A549 (cell line): ENCODE measurements at regions of chr10 and their contacts with region 1.

Region 1: GRCh38 chr10:13299437-13300287 is at the start of gene PHYH:
- DNase-seq: peak; percentile 83 to 86
- ATAC-seq: peak; percentile 89 to 92
- H3K4me3 ChIP-seq: peak within 1 kb of the TSS; percentile 75
- H3K27ac ChIP-seq: peak within 1 kb of the TSS; percentile 90 to 96
- H3K4me1 ChIP-seq: peaks cover 9% of the 10 kb centered on the region
- CTCF ChIP-seq: no peak
- EP300 ChIP-seq: no peak
- POLR2A ChIP-seq: peak; percentile 97
- RAD21 ChIP-seq: no peak
- polyA plus RNA-seq, gene PHYH: 25.6 and 28.0 TPM in 2 replicates

Region 2: DNA sequence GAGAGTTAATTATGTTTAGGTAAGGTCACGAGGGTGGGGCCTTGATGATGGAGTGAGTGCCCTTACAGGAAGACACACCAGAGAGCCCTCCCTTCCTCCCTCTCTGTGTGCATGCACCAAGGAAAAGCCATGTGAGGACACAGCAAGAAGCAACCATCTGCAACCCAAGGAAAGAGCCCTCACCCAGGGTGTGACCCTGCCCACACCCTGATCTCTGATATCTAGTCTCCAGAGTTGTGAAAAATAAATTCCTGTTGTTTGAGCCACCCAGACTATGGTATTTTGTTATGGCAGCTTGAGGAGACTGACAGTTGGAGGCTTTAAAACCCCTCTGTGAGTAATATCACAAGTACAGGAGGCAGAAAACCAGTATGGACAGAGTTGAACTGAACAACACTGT is 153.3 kb before region 1 on chr10:
- CTCF ChIA-PET with region 1: no interaction called
- POLR2A ChIA-PET with region 1: no interaction called
- DNase-seq: peak in 1 of 2 experiments; percentile 14
- ATAC-seq: peak in 1 of 2 experiments; percentile 54; a peak in 2 of 6 replicates
- H3K4me3 ChIP-seq: no peak overlapping the region
- H3K27ac ChIP-seq: no peak overlapping the region
- H3K4me1 ChIP-seq: 0 out of 3 replicates have a peak, but pooled peaks cover 4% of the 10 kb centered on the region
- CTCF ChIP-seq: no peak
- EP300 ChIP-seq: no peak
- POLR2A ChIP-seq: no peak
- RAD21 ChIP-seq: no peak

Region 3: GRCh38 chr10:13206546-13207443 is 92.9 kb before region 1 on chr10:
- CTCF ChIA-PET with region 1: interaction called, 87 read pairs
- POLR2A ChIA-PET with region 1: interaction called, 7 read pairs
- DNase-seq: peak in 1 of 2 experiments; percentile 47
- ATAC-seq: peak in 1 of 2 experiments; percentile 60; a peak in 2 of 6 replicates
- H3K4me3 ChIP-seq: no peak overlapping the region
- H3K27ac ChIP-seq: no peak overlapping the region
- H3K4me1 ChIP-seq: no peaks in the 10 kb centered on the region
- CTCF ChIP-seq: peak; percentile 61
- EP300 ChIP-seq: no peak
- POLR2A ChIP-seq: no peak
- RAD21 ChIP-seq: peak; percentile 43 to 49; a peak in 4 of 5 replicates

Region 4: GRCh38 chr10:13311177-13311575 is 11.5 kb after region 1 on chr10:
- CTCF ChIA-PET with region 1: interaction called, 17 read pairs
- POLR2A ChIA-PET with region 1: interaction called, 3 read pairs
- DNase-seq: no peak
- ATAC-seq: no peak
- H3K4me3 ChIP-seq: no peak overlapping the region
- H3K27ac ChIP-seq: no peak overlapping the region
- H3K4me1 ChIP-seq: no peaks in the 10 kb centered on the region
- CTCF ChIP-seq: no peak
- EP300 ChIP-seq: no peak
- POLR2A ChIP-seq: no peak
- RAD21 ChIP-seq: no peak

Region 5: DNA sequence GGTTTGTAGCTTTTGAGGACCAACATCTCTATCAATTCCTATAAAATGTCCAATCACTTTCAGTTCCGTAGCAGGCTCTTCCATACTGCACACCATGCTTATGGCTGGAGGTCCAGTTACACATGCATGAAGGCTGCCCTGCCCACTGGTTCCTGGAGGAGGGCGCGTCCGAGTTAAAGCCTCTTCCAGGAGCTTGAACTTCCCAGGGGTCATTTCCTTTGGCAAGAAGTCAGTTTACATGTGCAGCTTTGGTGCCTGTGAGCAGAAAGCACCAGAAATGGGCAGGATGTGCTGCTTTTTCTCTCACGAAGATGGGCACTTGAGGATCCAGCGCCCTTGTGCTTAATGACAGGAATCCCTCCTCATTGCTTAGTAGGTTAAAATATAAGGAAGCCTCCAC is 17.8 kb after region 1 on chr10:
- CTCF ChIA-PET with region 1: interaction called, 17 read pairs
- POLR2A ChIA-PET with region 1: interaction called, 3 read pairs
- DNase-seq: no peak
- ATAC-seq: no peak
- H3K4me3 ChIP-seq: no peak overlapping the region
- H3K27ac ChIP-seq: no peak overlapping the region
- H3K4me1 ChIP-seq: no peaks in the 10 kb centered on the region
- CTCF ChIP-seq: no peak
- EP300 ChIP-seq: no peak
- POLR2A ChIP-seq: no peak
- RAD21 ChIP-seq: no peak

Region 6: GRCh38 chr10:13328613-13329012 is 29.0 kb after region 1 on chr10:
- CTCF ChIA-PET with region 1: interaction called, 11 read pairs
- POLR2A ChIA-PET with region 1: no interaction called
- DNase-seq: no peak
- ATAC-seq: no peak; a peak in 1 of 6 replicates
- H3K4me3 ChIP-seq: no peak overlapping the region
- H3K27ac ChIP-seq: no peak overlapping the region
- H3K4me1 ChIP-seq: no peaks in the 10 kb centered on the region
- CTCF ChIP-seq: no peak
- EP300 ChIP-seq: no peak
- POLR2A ChIP-seq: no peak
- RAD21 ChIP-seq: no peak